PC-3 (cell line): ENCODE measurements at regions of chr3 and their contacts with region 1.

Region 1: GRCh38 chr3:44669760-44670159 is 21.2 kb downstream of the ZNF35 start:
- DNase-seq: no peak
- ATAC-seq: no peak
- H3K4me3 ChIP-seq: no peak overlapping the region
- H3K27ac ChIP-seq: no peak overlapping the region
- H3K4me1 ChIP-seq: peaks cover 9% of the 10 kb centered on the region; the same call in 1 of the 2 replicates
- H3K27me3 ChIP-seq: no peaks in the 10 kb centered on the region
- CTCF ChIP-seq: no peak

Region 2: DNA sequence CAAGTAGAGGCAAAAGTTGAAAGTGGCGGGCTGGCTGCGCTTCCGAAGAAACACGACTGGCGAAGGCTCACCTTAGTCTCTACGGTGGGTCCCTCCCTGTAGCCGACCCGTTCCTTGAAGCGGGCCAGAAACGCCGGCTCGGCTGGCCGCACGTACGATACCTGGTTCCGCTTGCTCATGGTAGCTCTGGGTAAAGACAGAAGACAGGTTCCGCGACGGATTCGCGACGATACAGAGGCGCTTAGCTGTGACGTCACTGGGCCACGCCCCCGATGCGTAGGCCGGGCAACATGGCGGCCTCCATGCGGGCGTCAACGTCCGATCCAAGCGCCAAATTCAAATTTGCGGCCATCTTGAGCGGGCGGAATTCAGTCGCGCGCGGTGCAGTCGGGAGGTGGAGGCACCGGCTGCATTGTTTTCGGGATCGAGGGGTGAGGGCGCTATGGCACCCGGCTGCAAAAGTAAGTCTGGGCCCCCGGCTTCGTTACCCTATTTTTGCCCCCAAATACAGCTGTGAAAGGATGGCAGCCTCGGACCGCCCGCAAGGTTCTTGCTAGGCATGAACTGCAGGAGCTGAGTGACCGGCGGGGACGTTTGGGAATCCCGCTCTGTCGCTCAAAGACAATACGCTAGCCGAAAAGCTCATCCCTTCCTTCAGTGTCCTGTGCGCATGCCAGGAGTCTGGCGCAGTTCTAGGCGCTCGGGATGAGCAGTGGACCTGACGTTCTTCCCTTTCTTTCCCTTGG is 91.8 kb after region 1 on chr3 and contains the starts of genes KIAA1143 and KIF15:
- CTCF ChIA-PET with region 1: interaction called, 10 read pairs
- POLR2A ChIA-PET with region 1: no interaction called
- intact Hi-C with region 1: no loop called
- DNase-seq: peak; percentile 98
- ATAC-seq: peak; percentile 90
- H3K4me3 ChIP-seq: peak within 1 kb of the TSS; percentile 76
- H3K27ac ChIP-seq: peak within 1 kb of the TSS; percentile 55
- H3K4me1 ChIP-seq: peaks cover 7% of the 10 kb centered on the region
- H3K27me3 ChIP-seq: no peaks in the 10 kb centered on the region
- CTCF ChIP-seq: peak; percentile 30; the same call in 1 of the 2 replicates
- total RNA-seq, gene KIAA1143: 16.5 and 20.4 TPM in 2 replicates
- total RNA-seq, gene KIF15: 19.1 and 31.8 TPM in 2 replicates